ENCODE measurements at regions of chr19 and their contacts with region 1.

Region 1: GRCh38 chr19:46283771-46284170 is 13.1 kb upstream of the HIF3A start:
- DNase-seq: no peak

Region 2: DNA sequence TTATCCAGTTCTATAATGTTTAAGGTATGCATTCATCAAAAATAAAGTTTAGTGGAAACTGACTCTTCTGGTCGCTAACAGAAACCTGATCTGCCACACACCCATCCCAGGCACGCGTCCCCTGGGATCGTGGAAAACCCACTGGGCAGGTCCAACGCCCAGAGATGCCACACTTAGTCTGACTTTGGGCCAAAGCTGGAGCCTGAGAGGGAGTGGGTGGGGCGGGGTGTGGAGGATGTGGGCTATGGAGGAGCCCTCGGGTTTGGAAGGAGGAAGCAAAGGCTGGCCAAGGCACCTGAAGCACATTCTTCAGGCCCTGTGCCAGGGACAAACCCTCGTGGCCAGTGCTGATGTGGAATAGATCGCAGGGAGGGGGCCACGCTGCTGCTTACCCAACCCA is 51.7 kb before region 1 on chr19:
- intact Hi-C with region 1: no loop called
- DNase-seq: no peak

Region 3: DNA sequence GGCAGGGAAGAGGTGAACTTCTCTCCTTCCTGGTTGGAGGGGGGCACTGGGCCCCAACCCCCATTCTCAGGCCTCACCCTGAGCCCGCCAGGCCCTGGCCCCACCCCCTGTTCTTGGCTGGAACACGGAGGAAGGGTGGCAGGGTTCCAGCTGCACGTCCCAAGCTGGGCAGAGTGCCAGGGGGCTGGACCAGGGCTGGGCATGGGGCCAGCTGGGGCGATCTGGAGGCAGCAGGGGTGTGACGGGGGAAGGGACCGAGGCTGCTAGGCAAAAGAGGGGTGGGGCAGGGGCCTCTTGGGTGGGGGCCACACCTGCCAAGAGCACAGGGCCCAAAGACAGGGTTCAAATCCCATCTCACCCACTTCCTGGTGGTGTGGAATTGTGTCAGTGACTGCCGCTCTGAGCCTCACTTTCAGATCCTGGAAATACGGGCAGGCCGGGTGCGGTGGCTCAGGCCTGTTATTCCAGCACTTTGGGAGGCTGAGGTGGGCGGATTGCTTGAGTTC is 15.3 kb after region 1 on chr19:
- intact Hi-C with region 1: no loop called
- DNase-seq: peak; percentile 87 to 99 (median 94)

Region 4: GRCh38 chr19:46319613-46320012 is 35.8 kb after region 1 on chr19:
- intact Hi-C with region 1: no loop called
- DNase-seq: peak in 2 of 10 donors; percentile 25 to 26

Region 5: DNA sequence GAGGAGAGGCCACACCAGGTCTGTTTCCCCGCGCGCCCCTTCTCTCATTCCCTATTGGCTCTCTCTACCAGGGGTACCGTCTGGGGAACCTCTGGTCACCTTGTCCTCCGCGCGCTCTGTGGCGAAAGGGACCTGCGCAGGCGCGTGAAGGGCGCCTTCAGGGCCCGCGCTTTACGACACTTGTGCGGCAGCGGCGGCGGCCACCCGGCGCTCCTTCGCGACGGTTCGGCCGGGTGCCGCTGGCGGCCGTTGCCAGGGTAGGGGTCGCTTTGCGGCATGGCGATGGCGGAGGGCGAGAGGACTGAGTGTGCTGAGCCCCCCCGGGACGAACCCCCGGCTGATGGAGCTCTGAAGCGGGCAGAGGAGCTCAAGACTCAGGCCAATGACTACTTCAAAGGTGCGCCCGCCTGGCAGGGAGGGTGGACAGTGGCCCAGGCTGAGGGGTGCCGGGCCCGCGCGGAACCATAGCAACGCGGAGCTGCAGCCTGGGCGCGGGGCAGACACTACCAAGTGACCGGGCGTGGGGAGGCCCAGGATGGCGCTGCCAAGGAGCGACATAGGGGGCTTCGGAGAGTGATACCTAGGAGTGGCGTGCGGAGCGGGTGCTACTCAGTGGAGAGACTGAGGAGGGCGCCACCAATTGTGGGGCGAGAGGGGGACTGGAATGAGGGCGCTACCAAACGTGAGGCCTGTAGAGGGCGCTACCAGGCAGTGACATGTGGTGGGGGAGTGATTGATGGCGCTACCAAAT is 63.2 kb after region 1 on chr19 and contains the start of gene PPP5C:
- intact Hi-C with region 1: loop called (anchors 5 kb)
- DNase-seq: peak; percentile 83 to 97 (median 86)

Region 6: DNA sequence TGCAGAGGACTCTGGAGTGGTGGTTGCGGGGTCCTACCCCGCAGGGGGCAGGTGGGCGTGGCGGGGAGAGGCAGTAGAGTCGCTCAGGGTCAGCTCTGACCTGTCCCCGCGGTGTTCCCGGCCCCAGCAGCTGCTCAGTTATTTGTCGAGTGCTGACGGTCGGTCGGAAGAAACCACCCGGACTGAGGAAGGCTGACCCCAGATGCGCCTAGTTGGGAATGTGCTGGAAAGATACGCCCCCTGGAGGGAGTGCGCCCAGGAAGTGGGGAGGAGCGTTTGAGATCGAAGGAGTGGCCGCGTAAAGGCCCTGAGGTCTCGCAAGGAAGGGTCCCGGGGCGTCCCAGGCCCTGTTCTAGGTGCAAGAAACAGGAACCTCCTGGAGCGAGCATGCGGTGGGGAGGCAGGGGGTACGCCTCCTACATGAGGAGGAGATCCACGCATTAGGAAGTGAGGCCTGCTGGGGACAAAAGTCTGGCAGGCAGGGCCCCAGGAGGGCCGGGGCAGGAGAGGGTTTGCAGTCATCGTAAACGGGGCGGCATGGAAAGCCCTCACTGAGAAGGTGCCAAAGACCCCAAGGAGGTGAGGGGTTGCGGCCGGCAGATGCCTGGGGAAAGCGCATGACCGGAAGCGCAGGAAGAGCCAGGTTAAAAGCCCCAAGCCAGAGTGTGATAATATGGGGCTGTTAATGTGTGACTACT is 120.4 kb after region 1 on chr19:
- intact Hi-C with region 1: loop called (anchors 5 kb)
- DNase-seq: peak in 4 of 10 donors; percentile 17 to 86 (median 78)

Region 7: DNA sequence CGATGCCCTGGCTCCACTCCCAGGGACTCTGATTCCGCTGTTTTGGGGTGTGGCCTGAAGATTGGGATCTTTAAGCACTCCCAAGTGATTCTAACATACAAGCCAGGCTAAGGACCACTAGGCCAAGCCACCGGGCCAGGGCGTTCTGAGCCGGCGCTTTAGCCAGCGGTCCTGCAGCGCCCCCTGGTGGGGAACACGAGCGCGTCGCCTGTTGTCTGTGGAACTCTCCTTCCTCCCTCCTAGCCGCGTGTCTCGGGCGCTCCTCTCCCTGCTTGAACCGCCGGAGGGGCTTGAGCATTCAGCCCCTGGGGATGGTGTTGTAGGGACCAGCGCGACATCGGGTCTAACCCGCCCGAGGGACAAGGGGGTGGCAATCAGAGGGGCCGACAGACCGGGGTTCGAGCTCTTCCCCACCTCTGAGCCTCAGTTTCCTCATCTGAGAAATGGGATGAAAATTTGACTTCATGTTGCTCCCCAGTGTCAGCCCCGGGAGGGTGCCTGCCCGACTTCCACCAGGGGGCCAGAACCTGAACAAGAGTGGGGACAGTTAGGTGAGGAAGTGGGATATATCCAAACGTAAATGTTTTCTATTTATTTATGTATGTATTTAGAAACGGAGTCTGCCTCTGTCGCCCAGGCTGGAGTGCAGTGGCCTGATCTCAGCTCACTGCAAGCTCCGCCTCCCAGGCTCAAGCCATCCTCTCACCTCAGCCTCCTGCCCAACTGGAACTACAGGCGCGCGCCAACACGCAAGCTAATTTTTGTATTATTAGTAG is 229.9 kb after region 1 on chr19:
- intact Hi-C with region 1: loop called (anchors 2 kb)
- DNase-seq: peak; percentile 72 to 98 (median 88)